MCF 10A (cell line): ENCODE measurements at regions of chr18 and their contacts with region 1.

Region 1: GRCh38 chr18:64097497-64097896 is 51.4 kb downstream of the LINC00305 start:
- DNase-seq: no peak
- H3K4me3 Mint-ChIP-seq: no peak overlapping the region
- H3K27ac Mint-ChIP-seq: no peak overlapping the region
- H3K4me1 Mint-ChIP-seq: no peaks in the 10 kb centered on the region
- H3K27me3 Mint-ChIP-seq: peaks cover 77% of the 10 kb centered on the region
- CTCF ChIP-seq: peak; percentile 33

Region 2: DNA sequence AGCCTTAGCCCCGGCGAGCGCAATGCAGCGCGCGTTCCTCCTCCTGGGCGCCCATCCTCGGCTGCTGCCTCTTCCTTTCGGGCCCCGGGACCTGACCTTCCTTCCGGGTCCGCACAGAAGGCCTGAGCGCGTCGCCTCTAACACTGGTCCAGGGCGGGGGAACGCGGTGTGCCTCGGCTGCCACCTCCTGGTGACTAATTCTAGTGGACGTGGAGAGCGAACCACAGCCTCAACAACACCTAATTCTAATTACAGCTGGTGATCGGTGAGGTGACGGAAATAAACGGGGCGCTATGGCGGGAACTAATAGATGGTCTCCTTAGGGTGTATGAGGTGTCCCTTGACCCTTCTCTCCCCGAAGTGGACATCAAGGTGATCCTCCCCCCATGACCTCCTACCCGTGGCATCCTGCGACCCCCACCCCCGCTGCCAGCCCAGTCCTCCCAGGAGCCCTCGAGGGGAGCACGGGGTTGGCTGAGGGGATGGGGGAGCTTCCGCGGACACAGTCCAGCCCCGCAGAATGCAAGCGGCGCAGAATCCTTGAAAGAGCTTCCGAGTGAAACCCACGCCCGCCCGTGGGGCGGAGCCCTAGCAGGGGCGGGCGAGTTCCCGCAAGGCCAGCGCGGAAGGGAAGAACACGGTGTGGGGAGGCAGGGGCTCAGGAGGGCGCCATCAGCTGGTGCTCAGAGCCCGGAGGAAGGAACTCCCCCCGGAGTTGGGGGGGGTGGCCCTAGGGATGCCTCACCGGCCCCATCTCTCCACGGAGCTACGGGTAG is 161.2 kb before region 1 on chr18:
- CTCF ChIA-PET with region 1: no interaction called
- POLR2A ChIA-PET with region 1: no interaction called
- intact Hi-C with region 1: no loop called
- DNase-seq: peak; percentile 90
- H3K4me3 Mint-ChIP-seq: no peak overlapping the region
- H3K27ac Mint-ChIP-seq: peak overlapping the region; percentile 40
- H3K4me1 Mint-ChIP-seq: no peaks in the 10 kb centered on the region
- H3K27me3 Mint-ChIP-seq: no peaks in the 10 kb centered on the region
- CTCF ChIP-seq: peak; percentile 75

Region 3: GRCh38 chr18:64409511-64409910 is 312.0 kb after region 1 on chr18:
- CTCF ChIA-PET with region 1: no interaction called
- POLR2A ChIA-PET with region 1: no interaction called
- intact Hi-C with region 1: loop called (anchors 5 kb)
- DNase-seq: peak; percentile 51
- H3K4me3 Mint-ChIP-seq: no peak overlapping the region
- H3K27ac Mint-ChIP-seq: no peak overlapping the region
- H3K4me1 Mint-ChIP-seq: no peaks in the 10 kb centered on the region
- H3K27me3 Mint-ChIP-seq: peaks cover 25% of the 10 kb centered on the region
- CTCF ChIP-seq: peak; percentile 34

Region 4: GRCh38 chr18:65091744-65092329 is 994.3 kb after region 1 on chr18:
- CTCF ChIA-PET with region 1: interaction called, 4 read pairs
- POLR2A ChIA-PET with region 1: no interaction called
- intact Hi-C with region 1: loop called (anchors 2 kb)
- DNase-seq: peak; percentile 55
- H3K4me3 Mint-ChIP-seq: no peak overlapping the region
- H3K27ac Mint-ChIP-seq: no peak overlapping the region
- H3K4me1 Mint-ChIP-seq: no peaks in the 10 kb centered on the region
- H3K27me3 Mint-ChIP-seq: peaks cover 12% of the 10 kb centered on the region
- CTCF ChIP-seq: no peak